BJ (cell line): ENCODE measurements at regions of chr1 and their contacts with region 1.

Region 1: DNA sequence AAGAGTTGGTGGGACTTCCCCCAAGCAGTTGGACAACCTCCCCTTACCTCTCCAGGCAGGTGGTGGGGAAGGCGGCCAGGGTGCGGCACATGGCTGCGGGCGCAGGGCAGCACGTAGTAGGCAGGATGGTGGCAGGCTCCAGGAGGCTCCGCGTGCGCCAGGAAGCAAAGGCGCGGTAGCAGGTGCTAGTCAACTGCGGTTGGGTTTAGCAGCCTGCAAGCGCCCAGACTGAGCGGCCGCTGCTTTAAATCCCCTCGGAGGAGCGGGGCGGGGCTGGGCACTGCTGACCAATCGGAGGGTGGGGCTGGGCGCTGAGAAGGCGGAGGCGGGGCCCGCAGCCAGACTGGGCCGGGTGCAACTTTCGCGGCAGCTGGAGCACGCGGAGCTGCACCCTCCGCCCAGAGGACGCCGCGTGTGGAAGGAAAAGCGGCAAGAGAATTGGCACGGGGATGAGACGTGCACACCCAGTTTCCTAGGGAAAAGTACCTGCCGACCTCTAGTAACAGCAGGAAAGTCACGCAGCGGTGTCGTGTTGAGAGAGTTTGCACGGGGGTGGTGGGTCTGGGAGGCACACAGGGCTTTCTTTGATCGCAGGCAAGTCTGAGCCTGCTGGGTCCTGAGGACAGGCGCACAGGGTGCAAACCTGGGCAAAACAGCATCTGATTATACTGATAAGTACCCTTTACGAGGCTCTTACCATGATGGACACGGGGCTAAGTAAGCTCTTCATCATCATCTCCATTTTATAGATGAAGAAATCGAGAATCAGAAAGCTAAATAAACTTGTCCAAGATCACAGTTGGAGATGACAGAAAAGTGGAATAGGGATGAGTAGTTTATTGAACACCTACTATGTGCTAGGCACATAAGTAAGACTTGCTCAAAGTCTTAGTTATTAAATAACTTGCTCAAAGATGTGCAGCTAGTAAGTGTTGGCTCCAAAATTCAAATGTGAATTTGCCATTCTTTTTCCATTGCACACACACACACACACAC is at the start of gene RGS16:
- DNase-seq: no peak
- H3K4me3 ChIP-seq: peak within 1 kb of the TSS; percentile 47
- H3K27me3 ChIP-seq: peaks cover 4% of the 10 kb centered on the region
- CTCF ChIP-seq: no peak
- polyA plus RNA-seq, gene RGS16: 0.23 TPM in 2 replicates

Region 2: DNA sequence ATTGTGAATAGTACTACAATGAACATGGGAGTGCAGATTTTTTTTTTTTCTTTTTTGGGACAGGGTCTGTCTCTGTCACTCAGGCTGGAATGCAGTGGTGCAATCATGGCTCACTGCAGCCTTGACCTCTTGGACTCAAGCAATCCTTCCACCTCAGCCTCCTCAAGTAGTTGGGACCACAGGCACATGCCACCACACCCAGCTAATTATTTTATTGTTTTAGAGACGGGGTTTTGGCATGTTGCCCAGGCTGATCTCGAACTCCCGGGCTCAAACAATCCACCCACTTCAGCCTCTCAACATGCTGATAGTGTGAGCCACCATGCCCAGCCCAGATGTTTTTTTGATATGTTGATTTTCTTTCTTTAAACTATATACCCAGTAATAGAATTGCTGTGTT is 96.8 kb before region 1 on chr1:
- CTCF ChIA-PET with region 1: no interaction called
- POLR2A ChIA-PET with region 1: no interaction called
- DNase-seq: no peak
- H3K4me3 ChIP-seq: no peak overlapping the region
- H3K27me3 ChIP-seq: no peaks in the 10 kb centered on the region
- CTCF ChIP-seq: no peak

Region 3: DNA sequence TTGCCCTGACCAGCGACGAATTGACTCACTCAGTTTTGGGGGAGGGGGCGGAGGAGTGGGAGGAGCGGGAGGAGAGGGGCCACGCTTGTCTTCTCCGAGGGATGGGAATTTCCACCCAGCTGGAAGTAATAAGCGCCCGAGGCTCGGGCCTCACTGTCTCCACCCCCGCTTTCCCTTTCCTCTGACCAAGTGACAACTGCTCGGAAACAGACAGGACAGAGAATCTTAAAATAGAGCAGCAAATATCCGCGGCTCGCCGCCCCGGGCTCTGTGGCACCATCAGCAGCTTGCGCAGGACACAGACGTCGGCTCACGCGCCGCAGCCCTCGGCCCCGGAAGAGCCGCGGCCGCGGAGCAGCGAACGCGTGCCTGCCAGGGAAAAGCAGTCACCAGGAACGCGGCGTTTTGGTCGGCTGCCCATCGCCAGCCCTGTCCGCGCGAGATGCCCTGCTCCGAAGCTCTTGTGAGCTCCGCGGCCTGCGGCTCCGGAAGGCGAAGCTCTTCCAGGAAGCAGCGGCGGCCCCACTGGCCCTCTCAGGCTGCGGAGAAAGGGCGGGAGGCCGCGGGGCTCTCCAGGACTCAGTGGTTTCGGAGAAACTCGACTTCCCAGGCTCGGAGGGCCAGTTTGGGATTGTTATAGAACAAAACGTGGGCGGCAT is 10.5 kb after region 1 on chr1:
- CTCF ChIA-PET with region 1: interaction called, 39 read pairs
- POLR2A ChIA-PET with region 1: no interaction called
- DNase-seq: peak; percentile 73
- H3K4me3 ChIP-seq: peak overlapping the region; percentile 34
- H3K27me3 ChIP-seq: peaks cover 3% of the 10 kb centered on the region; the same call in 1 of the 2 replicates
- CTCF ChIP-seq: no peak

Region 4: GRCh38 chr1:182761396-182762395 is 157.2 kb after region 1 on chr1:
- CTCF ChIA-PET with region 1: interaction called, 10 read pairs
- POLR2A ChIA-PET with region 1: no interaction called
- DNase-seq: no peak
- H3K4me3 ChIP-seq: no peak overlapping the region
- H3K27me3 ChIP-seq: peaks cover 2% of the 10 kb centered on the region; the same call in 1 of the 2 replicates
- CTCF ChIP-seq: no peak

Region 5: GRCh38 chr1:182789138-182790076 is 184.9 kb after region 1 on chr1 and contains the start of gene NPL:
- CTCF ChIA-PET with region 1: interaction called, 488 read pairs
- POLR2A ChIA-PET with region 1: no interaction called
- DNase-seq: no peak
- H3K4me3 ChIP-seq: peak within 1 kb of the TSS; percentile 74
- H3K27me3 ChIP-seq: peaks cover 5% of the 10 kb centered on the region
- CTCF ChIP-seq: no peak
- polyA plus RNA-seq, gene NPL: 1.2 TPM in 2 replicates

Region 6: GRCh38 chr1:182910143-182910542 is 305.7 kb after region 1 on chr1:
- CTCF ChIA-PET with region 1: no interaction called
- POLR2A ChIA-PET with region 1: interaction called, 13 read pairs
- DNase-seq: no peak
- H3K4me3 ChIP-seq: no peak overlapping the region
- H3K27me3 ChIP-seq: no peaks in the 10 kb centered on the region; the same call in none of the 2 replicates
- CTCF ChIP-seq: no peak

Region 7: GRCh38 chr1:182962554-182963115 is 358.2 kb after region 1 on chr1:
- CTCF ChIA-PET with region 1: no interaction called
- POLR2A ChIA-PET with region 1: no interaction called
- DNase-seq: peak; percentile 57
- H3K4me3 ChIP-seq: 0 out of 2 replicates have a peak overlapping the region, but pooled peaks have one; percentile 1
- H3K27me3 ChIP-seq: no peaks in the 10 kb centered on the region
- CTCF ChIP-seq: peak; percentile 91